BJ (cell line): ENCODE measurements at regions of chr17 and their contacts with region 1.

Region 1: DNA sequence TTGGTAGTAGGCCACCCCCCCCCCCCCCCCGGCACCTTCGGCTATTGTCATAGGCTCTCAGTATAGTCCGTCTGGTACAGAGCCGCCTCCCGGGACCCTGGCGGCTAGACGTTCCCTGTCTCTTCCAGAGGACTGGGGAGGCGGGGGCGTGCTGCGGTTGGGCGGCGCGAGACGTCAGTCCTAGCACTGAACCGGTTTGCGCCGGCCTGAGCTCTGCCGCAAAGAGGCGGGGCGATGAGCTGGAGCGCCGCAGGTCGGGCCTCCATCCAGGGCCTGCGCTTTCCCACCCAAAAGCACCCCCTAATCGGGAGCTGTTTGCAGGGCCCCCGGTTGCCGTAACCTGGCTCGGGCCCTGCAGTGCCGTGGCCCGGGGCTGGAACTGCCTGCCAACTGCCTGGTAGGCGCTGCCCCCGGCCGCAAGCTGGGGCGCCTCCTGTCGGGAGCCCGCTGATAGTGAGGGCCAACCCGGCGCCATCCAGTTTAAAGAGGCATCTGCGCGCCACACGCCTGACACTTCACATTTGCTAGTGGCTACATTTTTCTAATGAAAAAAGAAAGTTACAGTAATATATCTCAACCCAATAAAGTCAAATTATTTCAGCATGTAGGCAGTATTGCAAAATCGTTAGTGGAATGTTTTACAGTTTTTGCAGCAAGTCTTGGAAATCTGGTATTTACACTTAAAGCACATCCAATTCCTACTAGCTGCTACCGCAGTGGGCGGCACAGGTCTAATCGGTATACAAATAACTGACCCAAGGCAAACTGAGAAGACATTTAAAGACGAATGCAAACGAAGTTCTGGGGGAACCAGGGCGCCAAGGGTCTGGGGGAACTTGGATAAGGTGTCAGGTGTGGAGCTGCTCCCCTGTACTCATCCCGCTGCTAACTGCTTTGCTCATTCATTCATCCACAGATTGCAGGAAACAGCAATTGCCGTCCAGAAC is 748 bp upstream of the USP22 start:
- DNase-seq: peak; percentile 86
- H3K4me3 ChIP-seq: peak overlapping the region; percentile 60
- H3K27me3 ChIP-seq: 0 out of 2 replicates have a peak, but pooled peaks cover 1% of the 10 kb centered on the region
- CTCF ChIP-seq: peak; percentile 91

Region 2: DNA sequence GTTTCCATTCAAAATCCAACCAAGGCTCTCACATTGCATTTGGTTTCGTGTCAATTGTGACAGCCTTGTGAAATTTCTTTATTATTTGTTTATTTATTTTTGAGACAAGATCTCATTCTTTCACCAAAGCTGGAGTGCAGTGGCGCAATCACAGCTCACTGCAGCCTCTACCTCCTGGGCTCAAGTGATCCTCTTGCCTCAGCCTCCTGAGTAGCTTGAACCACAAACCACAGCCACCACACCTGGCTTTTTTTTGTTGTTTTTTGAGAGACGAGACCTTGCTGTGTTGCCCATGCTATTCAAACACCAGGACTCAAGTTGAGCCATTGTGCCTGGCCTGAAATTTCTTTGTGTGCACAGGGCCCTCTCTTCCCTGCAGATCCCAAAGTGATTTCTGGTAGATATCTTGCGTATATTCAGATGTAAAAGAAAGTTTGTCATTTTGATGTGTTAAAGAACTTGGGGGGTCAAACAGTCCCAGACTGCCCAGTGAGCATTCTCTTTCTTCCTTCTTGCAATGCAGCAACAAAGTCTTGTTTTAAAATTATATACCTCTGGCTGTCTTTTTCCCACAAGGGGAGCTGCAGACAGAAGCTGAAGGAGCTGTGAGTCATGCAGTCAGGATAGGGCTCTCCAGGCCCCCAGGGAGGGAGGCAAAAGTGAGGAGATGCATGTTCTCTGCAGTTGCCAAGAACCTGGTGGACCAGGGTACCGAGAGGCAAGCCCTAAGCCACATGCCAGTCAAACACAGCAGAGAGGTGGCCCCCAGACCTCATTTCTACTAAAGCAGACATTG is 14.7 kb after region 1 on chr17:
- CTCF ChIA-PET with region 1: interaction called, 21 read pairs
- POLR2A ChIA-PET with region 1: interaction called, 10 read pairs
- DNase-seq: no peak
- H3K4me3 ChIP-seq: no peak overlapping the region
- H3K27me3 ChIP-seq: peaks cover 10% of the 10 kb centered on the region
- CTCF ChIP-seq: peak; percentile 31